ENCODE measurements at regions of chr11 and their contacts with region 1.

Region 1: GRCh38 chr11:15988693-15989231 is 367.6 kb downstream of the SOX6 start:
- DNase-seq: no peak
- H3K4me3 ChIP-seq: no peak overlapping the region
- H3K27me3 ChIP-seq: no peaks in the 10 kb centered on the region
- CTCF ChIP-seq: peak; percentile 10; the same call in 1 of the 2 replicates

Region 2: DNA sequence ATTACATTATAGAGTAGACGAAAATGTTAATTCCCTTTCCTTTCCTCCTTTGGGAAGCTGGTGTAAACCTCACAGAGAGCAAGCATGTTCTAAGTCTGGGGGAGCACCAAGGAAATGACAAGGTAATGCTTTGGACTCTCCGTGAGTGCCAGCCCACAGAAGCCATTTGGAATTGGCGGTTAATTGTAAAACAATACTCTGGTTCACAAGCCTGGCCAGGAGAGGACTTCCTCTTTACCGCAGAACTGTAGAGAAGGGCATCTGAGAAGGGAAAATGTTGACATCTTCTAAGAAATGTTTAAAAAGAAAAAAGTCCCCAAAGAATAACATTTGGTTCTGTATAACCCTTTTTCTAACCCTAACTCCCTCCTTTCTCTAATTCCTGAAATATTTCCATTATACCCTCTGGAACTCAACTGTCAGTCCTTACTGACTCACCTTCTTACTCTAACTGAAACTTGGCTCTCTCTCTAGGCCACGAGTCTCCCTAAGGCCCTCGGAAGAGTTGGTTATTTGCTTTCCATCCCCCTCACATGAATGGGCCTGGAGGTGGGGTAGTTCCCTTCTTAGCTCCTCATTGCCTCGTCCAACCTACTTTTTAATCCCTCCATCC is 12.2 kb before region 1 on chr11:
- CTCF ChIA-PET with region 1: interaction called, 13 read pairs
- POLR2A ChIA-PET with region 1: no interaction called
- DNase-seq: no peak
- H3K4me3 ChIP-seq: no peak overlapping the region
- H3K27me3 ChIP-seq: no peaks in the 10 kb centered on the region
- CTCF ChIP-seq: no peak

Region 3: GRCh38 chr11:16148301-16148931 is 159.7 kb after region 1 on chr11:
- CTCF ChIA-PET with region 1: no interaction called
- POLR2A ChIA-PET with region 1: no interaction called
- DNase-seq: no peak
- H3K4me3 ChIP-seq: no peak overlapping the region
- H3K27me3 ChIP-seq: no peaks in the 10 kb centered on the region
- CTCF ChIP-seq: no peak